Panc1 (cell line): ENCODE measurements at regions of chr15 and their contacts with region 1.

Region 1: DNA sequence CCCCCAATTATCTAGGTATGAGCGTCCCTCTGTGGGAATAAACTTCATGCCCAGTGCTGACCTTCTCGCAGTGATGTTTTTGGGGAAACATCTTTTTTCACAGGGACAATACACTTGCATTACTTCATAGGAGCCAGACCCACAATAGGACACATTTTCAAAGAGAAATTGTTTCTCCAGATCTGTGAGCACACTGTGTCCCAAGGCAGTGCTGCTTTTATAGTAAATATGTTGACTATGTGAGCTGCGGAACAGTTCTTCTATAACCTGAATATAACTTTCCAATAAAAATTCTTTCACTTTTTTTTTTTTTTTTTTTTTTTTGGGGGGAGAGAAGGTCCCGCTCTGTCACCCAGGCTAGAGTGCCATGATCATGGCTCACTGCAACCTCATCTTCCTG is 17.4 kb upstream of the THSD4 start:
- DNase-seq: no peak
- ATAC-seq: no peak
- H3K4me3 ChIP-seq: no peak overlapping the region
- H3K27ac ChIP-seq: no peak overlapping the region
- H3K4me1 ChIP-seq: 0 out of 2 replicates have a peak, but pooled peaks cover 4% of the 10 kb centered on the region
- H3K27me3 ChIP-seq: no peaks in the 10 kb centered on the region
- CTCF ChIP-seq: no peak

Region 2: DNA sequence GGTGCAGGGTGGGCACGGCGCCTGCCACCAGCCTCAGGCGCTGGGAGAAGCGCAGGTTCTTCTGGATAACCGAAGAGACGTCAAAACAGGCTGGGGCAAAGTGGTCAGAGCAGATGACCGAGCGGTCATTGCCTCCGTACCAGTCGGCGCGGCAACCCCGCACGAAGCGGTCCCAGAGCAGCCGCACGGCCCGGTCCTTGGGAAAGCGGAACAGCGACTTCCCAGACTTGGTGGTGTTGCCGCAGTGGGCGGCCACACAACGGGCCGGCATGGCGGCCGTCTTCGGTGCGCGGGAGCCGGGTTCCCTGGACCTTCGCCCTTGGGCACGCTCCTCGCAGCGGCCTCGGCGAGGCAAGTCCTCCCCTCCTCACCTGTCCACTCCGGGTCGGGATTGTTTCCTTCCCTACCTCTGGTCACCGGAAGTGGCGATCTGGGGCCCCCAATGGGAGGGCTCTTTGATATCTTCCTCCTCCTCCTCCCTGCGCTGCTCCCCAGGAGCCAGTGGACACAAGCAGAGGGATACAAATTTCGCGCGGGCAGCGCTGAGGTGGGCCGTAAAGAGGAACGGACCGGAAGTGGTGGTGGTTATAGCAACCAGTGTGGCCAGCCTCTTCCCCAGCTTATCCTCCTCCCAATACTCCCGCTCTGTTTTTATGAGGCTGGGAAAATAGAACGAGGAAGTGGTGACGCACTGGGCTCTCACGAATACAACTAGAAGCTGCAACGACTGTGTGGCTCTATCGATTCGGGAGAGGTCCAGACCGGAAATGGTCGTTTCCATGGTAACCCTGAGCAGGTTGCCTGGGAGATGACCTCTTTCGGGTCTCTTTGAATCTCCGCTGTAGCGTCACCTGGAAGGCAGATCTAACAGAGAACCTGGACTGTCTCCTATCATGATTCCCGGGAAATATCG is 205.6 kb before region 1 on chr15 and contains the starts of genes LRRC49 and THAP10:
- CTCF ChIA-PET with region 1: no interaction called
- POLR2A ChIA-PET with region 1: no interaction called
- in situ Hi-C with region 1: no loop called
- intact Hi-C with region 1: no loop called
- DNase-seq: peak; percentile 96
- ATAC-seq: peak; percentile 99
- H3K4me3 ChIP-seq: peak within 1 kb of the TSS; percentile 77 to 84
- H3K27ac ChIP-seq: peak within 1 kb of the TSS; percentile 83
- H3K4me1 ChIP-seq: peaks cover 14% of the 10 kb centered on the region
- H3K27me3 ChIP-seq: no peaks in the 10 kb centered on the region
- CTCF ChIP-seq: no peak
- total RNA-seq, gene LRRC49: 8.3 TPM
- total RNA-seq, gene THAP10: 6.7 TPM

Region 3: GRCh38 chr15:71143373-71144310 is 45.8 kb after region 1 on chr15:
- CTCF ChIA-PET with region 1: interaction called, 11 read pairs
- POLR2A ChIA-PET with region 1: no interaction called
- in situ Hi-C with region 1: no loop called
- intact Hi-C with region 1: no loop called
- DNase-seq: no peak
- ATAC-seq: no peak
- H3K4me3 ChIP-seq: no peak overlapping the region
- H3K27ac ChIP-seq: no peak overlapping the region
- H3K4me1 ChIP-seq: peaks cover 16% of the 10 kb centered on the region
- H3K27me3 ChIP-seq: no peaks in the 10 kb centered on the region
- CTCF ChIP-seq: no peak

Region 4: GRCh38 chr15:71153823-71154524 is 56.1 kb after region 1 on chr15:
- CTCF ChIA-PET with region 1: no interaction called
- POLR2A ChIA-PET with region 1: interaction called, 25 read pairs
- in situ Hi-C with region 1: no loop called
- intact Hi-C with region 1: no loop called
- DNase-seq: no peak
- ATAC-seq: no peak
- H3K4me3 ChIP-seq: no peak overlapping the region
- H3K27ac ChIP-seq: no peak overlapping the region
- H3K4me1 ChIP-seq: peaks cover 13% of the 10 kb centered on the region; the same call in 1 of the 2 replicates
- H3K27me3 ChIP-seq: no peaks in the 10 kb centered on the region
- CTCF ChIP-seq: no peak